ENCODE measurements at regions of chr1 and their contacts with region 1.

Region 1: GRCh38 chr1:156096640-156097391 is 14.6 kb upstream of the MEX3A start:
- DNase-seq: peak; percentile 67
- H3K4me3 ChIP-seq: no peak overlapping the region
- H3K27ac ChIP-seq: peak overlapping the region; percentile 47
- H3K27me3 ChIP-seq: no peaks in the 10 kb centered on the region
- CTCF ChIP-seq: peak; percentile 98

Region 2: DNA sequence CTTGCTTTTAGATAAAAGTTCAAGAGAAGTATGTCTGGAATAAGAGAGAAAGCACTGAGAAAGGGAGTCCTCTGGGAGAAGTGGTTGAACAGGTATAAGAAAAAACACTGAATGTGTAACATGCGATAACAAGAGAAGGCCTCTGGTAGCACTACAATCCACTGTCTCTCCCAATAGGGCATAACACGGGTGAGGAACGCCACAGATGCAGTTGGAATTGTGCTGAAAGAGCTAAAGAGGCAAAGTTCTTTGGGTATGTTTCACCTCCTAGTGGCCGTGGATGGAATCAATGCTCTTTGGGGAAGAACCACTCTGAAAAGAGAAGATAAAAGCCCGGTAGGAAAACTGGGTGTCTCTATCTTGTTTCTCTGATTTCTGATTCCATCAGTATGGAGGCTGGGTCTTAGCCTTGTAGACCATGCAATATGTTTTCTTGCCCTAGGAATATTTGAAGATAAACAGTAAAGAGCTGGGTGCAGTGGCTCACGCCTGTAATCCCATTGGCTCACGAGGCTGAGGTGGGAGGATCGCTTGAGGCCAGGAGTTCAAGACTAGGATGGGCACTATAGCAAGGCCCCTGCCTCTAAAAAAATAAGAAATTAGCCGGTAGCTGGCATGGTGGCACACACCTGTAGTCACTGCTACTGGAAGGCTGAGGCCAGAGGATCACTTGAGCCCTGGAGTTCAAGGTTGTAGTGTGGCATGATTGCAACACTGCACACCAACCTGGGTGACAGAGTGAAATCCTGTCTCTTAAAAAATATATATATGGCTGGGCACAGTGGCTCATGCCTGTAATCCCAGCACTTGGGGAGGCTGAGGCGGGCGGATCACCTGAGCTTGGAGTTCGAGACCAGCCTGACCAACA is 367.6 kb before region 1 on chr1:
- CTCF ChIA-PET with region 1: no interaction called
- POLR2A ChIA-PET with region 1: no interaction called
- DNase-seq: peak; percentile 33
- H3K4me3 ChIP-seq: no peak overlapping the region
- H3K27ac ChIP-seq: no peak overlapping the region
- H3K27me3 ChIP-seq: no peaks in the 10 kb centered on the region
- CTCF ChIP-seq: peak; percentile 80

Region 3: GRCh38 chr1:156072251-156072650 is 24.6 kb before region 1 on chr1:
- CTCF ChIA-PET with region 1: no interaction called
- POLR2A ChIA-PET with region 1: no interaction called
- DNase-seq: no peak
- H3K4me3 ChIP-seq: no peak overlapping the region
- H3K27ac ChIP-seq: no peak overlapping the region
- H3K27me3 ChIP-seq: no peaks in the 10 kb centered on the region
- CTCF ChIP-seq: no peak

Region 4: GRCh38 chr1:156082309-156083091 is 14.3 kb before region 1 on chr1 and contains the start of gene MEX3A:
- CTCF ChIA-PET with region 1: interaction called, 15 read pairs
- POLR2A ChIA-PET with region 1: no interaction called
- DNase-seq: no peak
- H3K4me3 ChIP-seq: peak within 1 kb of the TSS; percentile 87
- H3K27ac ChIP-seq: peak within 1 kb of the TSS; percentile 61
- H3K27me3 ChIP-seq: no peaks in the 10 kb centered on the region
- CTCF ChIP-seq: no peak
- polyA plus RNA-seq, gene MEX3A: 11.8 and 14.6 TPM in 2 replicates

Region 5: DNA sequence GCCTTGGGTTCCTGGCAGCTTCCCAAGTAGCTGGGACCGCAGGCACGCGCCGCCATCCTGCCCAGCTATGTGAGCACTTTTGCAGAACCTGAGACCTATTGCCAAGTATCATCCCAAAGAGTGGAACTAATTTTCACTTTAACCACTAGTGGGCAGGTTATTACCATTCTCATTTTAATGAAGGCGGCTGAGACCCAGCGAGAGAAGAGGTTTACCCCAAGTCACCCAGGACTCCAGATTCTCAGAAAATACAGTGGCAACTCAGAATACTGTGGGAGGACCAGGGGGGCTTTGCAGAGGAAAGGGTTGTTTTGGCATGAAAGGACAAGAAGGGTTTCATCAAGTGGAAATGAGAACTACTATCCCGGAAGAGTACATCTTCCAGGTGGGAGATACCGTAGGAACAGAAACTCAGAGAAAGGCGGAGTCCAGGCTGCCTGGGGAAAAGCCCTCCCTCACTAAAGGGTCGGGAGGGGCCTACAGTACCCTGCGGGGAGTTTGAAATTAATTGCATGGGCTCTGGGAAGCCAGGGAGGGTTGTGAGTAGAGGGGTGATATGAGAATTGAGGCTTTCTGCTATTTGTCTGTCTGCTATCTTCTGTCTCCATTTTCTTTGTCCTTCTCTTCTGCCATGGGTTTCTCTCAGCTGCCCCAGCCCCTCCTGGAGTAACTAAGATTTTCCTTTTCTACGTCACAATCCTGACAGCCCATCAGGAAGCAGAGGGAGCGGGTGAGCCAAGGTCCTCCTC is 49.4 kb after region 1 on chr1:
- CTCF ChIA-PET with region 1: interaction called, 682 read pairs
- POLR2A ChIA-PET with region 1: interaction called, 17 read pairs
- DNase-seq: peak; percentile 86
- H3K4me3 ChIP-seq: no peak overlapping the region
- H3K27ac ChIP-seq: no peak overlapping the region
- H3K27me3 ChIP-seq: peaks cover 13% of the 10 kb centered on the region
- CTCF ChIP-seq: peak; percentile 64

Region 6: DNA sequence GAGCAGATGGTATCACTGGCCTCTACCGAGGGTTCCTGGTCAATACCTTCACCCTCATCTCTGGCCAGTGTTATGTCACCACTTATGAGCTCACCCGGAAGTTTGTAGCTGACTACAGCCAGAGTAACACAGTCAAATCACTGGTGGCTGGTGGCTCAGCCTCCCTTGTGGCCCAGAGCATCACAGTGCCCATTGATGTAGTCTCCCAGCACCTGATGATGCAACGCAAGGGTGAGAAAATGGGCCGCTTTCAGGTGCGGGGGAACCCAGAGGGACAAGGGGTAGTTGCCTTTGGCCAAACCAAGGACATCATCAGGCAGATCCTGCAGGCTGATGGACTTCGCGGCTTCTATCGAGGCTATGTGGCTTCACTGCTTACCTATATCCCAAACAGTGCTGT is 103.2 kb after region 1 on chr1:
- CTCF ChIA-PET with region 1: no interaction called
- POLR2A ChIA-PET with region 1: no interaction called
- DNase-seq: no peak
- H3K4me3 ChIP-seq: no peak overlapping the region
- H3K27ac ChIP-seq: no peak overlapping the region
- H3K27me3 ChIP-seq: no peaks in the 10 kb centered on the region
- CTCF ChIP-seq: no peak

Measured in AG04450 (cell line).